ENCODE measurements at regions of chr10 and their contacts with region 1.

Region 1: DNA sequence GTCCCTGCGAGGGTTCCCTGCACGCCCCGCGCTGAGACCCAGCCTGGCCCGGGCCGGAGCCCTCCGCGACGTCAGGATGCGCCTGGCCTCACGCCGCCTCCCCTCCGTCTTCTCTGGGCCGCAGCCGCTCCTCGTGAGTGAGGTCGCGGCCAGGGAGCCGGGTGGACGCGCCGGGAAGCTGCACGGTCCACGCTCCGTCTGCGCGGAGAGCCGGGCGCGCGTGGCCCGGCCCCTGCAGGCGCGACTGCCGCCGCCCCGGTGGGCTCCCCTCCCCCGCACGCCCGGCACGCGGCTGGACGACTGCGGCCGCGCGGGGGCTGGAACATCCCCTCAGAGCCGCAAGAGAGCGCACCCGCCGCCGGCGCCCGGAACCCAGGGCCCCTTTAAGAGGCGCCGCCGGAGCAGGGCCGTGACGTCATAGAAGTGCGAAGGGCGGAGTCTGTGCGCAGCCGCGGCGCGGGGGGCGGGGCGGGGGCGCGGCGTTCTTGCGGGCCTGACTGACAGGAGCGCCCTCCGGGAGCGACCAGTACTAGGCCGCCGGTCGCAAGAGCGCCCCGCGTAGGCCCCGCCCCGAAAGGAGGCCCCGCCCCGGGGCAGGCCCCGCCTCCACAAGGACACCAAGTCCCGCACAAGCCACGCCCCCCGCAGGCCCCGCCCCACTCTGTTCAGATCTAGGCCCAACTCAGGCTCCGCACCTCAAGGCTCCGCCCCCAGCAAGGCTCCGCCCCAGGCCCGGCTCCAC is 445 bp upstream of the INPP5A start:
- DNase-seq: peak; percentile 84
- ATAC-seq: peak; percentile 84
- H3K4me3 ChIP-seq: peak overlapping the region; percentile 68
- H3K27ac ChIP-seq: no peak overlapping the region
- H3K4me1 ChIP-seq: peaks cover 29% of the 10 kb centered on the region
- H3K27me3 ChIP-seq: no peaks in the 10 kb centered on the region
- CTCF ChIP-seq: peak; percentile 5 to 43 (median 13); a peak in 4 of 6 replicates
- EP300 ChIP-seq: no peak
- POLR2A ChIP-seq: peak; percentile 52; the same call in 1 of the 2 replicates
- RAD21 ChIP-seq: peak; percentile 31; the same call in 1 of the 2 replicates

Region 2: DNA sequence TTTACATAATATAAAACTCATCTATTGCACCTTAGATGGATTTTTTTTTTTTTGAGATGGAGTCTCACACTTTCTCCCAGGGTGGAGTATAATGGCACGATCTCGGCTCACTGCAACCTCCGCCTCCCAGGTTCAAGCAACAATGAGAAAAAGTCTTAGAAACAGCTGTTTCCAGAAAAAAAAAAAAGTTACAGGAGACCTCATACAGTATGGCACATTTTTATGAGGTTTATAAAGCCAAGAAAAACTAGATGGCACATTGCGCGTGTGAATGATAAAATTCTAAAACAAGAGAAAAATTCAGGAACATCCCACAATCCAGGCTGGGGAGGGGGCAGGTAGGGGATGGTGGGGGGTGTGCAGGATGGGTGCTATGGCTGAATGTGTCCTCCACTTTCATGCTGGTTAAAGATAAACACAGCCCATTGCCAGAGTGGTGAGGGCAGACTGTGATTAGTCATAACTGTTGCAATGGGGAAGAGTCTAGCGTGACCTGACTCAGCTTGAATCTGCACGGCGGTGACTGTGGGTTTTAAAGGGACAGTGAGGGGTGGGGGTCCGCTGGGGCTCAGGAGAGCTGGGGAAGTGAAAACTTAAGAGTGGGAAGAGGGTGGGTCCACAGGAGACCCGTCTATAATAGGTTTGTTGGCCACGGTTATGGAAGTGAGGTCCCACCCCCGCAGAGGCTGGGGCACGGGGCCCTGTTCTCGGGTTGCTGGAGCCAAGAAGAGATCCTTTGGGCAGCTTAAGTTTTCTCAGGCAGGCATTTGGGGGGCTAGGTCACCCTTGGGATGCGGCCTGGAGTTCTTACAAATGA is 217.1 kb before region 1 on chr10:
- CTCF ChIA-PET with region 1: no interaction called
- POLR2A ChIA-PET with region 1: no interaction called
- RAD21 ChIA-PET with region 1: no interaction called
- SMC1A ChIA-PET with region 1: no interaction called
- in situ Hi-C with region 1: no loop called
- intact Hi-C with region 1: loop called (anchors 5 kb)
- DNase-seq: peak; percentile 66
- ATAC-seq: peak; percentile 100
- H3K4me3 ChIP-seq: no peak overlapping the region
- H3K27ac ChIP-seq: peak overlapping the region; percentile 17; the same call in 1 of the 2 replicates
- H3K4me1 ChIP-seq: peaks cover 27% of the 10 kb centered on the region
- H3K27me3 ChIP-seq: no peaks in the 10 kb centered on the region
- CTCF ChIP-seq: no peak
- EP300 ChIP-seq: peak in 1 of 2 experiments; percentile 83; a peak in 1 of 4 replicates
- POLR2A ChIP-seq: no peak
- RAD21 ChIP-seq: 0 out of 2 replicates have a peak, but pooled peaks have one; percentile 5

Region 3: DNA sequence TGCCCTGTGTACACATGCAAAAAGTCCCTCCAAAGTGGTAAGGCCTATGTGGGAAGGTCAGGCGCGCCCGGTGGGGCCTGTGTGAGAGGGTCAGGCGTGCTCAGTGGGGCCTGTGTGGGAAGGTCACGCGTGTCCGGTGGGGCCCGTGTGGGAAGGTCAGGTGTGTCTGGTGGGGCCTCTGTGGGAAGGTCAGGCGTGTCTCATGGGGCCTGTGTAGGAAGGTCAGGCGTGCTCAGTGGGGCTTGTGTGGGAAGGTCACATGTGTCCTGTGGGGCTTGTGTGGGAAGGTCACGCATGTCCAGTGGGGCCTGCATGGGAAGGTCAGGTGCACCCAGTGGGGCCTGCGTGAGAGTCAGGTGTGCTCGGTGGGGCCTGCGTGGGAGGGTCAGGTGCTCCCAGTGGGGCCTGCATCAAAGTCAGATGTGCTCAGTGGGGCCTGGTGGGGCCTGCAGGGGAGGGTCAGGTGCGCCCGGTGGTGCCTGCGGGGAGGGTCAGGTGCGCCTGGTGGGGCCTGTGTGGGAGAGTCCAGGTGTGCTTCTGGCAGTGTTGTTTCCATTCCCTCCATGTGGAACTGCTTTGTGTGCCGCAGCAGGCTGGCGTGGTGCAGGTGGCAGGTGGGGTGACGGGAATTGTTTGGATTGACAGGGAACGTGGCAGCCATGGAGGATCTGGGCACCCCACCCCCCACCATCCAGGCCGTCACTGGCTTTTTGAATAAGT is 189.8 kb before region 1 on chr10:
- CTCF ChIA-PET with region 1: no interaction called
- POLR2A ChIA-PET with region 1: no interaction called
- RAD21 ChIA-PET with region 1: no interaction called
- SMC1A ChIA-PET with region 1: no interaction called
- in situ Hi-C with region 1: no loop called
- intact Hi-C with region 1: no loop called
- DNase-seq: no peak
- ATAC-seq: no peak
- H3K4me3 ChIP-seq: no peak overlapping the region
- H3K27ac ChIP-seq: no peak overlapping the region
- H3K4me1 ChIP-seq: no peaks in the 10 kb centered on the region
- H3K27me3 ChIP-seq: no peaks in the 10 kb centered on the region
- CTCF ChIP-seq: no peak
- EP300 ChIP-seq: no peak
- POLR2A ChIP-seq: no peak
- RAD21 ChIP-seq: no peak

Region 4: DNA sequence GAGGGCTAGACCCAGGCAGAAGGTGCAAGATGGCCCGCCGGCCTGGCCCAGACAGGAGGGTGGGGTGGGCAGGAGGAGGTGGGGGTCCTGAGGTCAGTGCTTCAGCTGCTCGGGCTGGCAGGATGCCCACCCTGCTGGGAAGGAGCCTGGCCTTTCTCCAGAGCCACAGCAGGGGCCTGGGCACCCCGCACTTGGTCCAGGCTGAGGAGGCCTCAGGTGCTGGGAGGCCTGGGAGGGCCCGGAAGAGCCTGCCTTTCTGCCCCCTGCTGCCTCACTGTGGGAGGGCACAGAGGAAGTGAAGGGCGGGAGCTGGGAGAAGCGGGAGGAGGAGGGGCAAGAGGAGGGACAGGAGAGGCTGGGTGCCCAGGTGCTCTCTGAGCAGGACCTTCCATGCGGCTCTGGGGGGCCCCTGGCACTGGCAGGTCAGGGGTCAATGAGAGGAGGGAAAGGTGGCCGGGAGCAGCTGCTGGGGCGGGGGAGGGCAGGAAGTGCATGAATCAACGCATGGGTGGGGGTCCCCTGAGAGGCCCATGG is 90.4 kb before region 1 on chr10:
- CTCF ChIA-PET with region 1: no interaction called
- POLR2A ChIA-PET with region 1: no interaction called
- RAD21 ChIA-PET with region 1: no interaction called
- SMC1A ChIA-PET with region 1: no interaction called
- in situ Hi-C with region 1: no loop called
- intact Hi-C with region 1: no loop called
- DNase-seq: peak; percentile 21
- ATAC-seq: peak; percentile 84
- H3K4me3 ChIP-seq: 0 out of 2 replicates have a peak overlapping the region, but pooled peaks have one; percentile 16
- H3K27ac ChIP-seq: peak overlapping the region; percentile 62
- H3K4me1 ChIP-seq: peaks cover 19% of the 10 kb centered on the region
- H3K27me3 ChIP-seq: no peaks in the 10 kb centered on the region
- CTCF ChIP-seq: peak; percentile 43 to 63 (median 48)
- EP300 ChIP-seq: no peak
- POLR2A ChIP-seq: peak; percentile 51; the same call in 1 of the 2 replicates
- RAD21 ChIP-seq: peak; percentile 31; the same call in 1 of the 2 replicates

Region 5: GRCh38 chr10:132458593-132459300 is 78.4 kb before region 1 on chr10:
- CTCF ChIA-PET with region 1: interaction called, 25 read pairs
- POLR2A ChIA-PET with region 1: no interaction called
- RAD21 ChIA-PET with region 1: interaction called, 23 read pairs
- SMC1A ChIA-PET with region 1: interaction called, 17 read pairs
- in situ Hi-C with region 1: loop called (anchors 5 kb)
- intact Hi-C with region 1: no loop called
- DNase-seq: no peak
- ATAC-seq: peak; percentile 90
- H3K4me3 ChIP-seq: no peak overlapping the region
- H3K27ac ChIP-seq: no peak overlapping the region
- H3K4me1 ChIP-seq: no peaks in the 10 kb centered on the region
- H3K27me3 ChIP-seq: no peaks in the 10 kb centered on the region; a peak in 2 of 4 replicates
- CTCF ChIP-seq: peak; percentile 82 to 95 (median 90)
- EP300 ChIP-seq: no peak
- POLR2A ChIP-seq: no peak
- RAD21 ChIP-seq: peak; percentile 87

Region 6: GRCh38 chr10:132551093-132551807 is 14.1 kb after region 1 on chr10:
- CTCF ChIA-PET with region 1: interaction called, 26 read pairs
- POLR2A ChIA-PET with region 1: interaction called, 10 read pairs
- RAD21 ChIA-PET with region 1: interaction called, 26 read pairs
- SMC1A ChIA-PET with region 1: interaction called, 16 read pairs
- in situ Hi-C with region 1: no loop called
- intact Hi-C with region 1: no loop called
- DNase-seq: no peak
- ATAC-seq: peak; percentile 77
- H3K4me3 ChIP-seq: no peak overlapping the region
- H3K27ac ChIP-seq: no peak overlapping the region; the same call in 1 of the 2 replicates
- H3K4me1 ChIP-seq: peaks cover 30% of the 10 kb centered on the region
- H3K27me3 ChIP-seq: no peaks in the 10 kb centered on the region; a peak in 1 of 4 replicates
- CTCF ChIP-seq: peak in 1 of 3 experiments; percentile 8; a peak in 2 of 6 replicates
- EP300 ChIP-seq: no peak
- POLR2A ChIP-seq: peak; percentile 70
- RAD21 ChIP-seq: peak; percentile 23; the same call in 1 of the 2 replicates

Region 7: GRCh38 chr10:132563843-132564521 is 26.8 kb after region 1 on chr10:
- CTCF ChIA-PET with region 1: interaction called, 9 read pairs
- POLR2A ChIA-PET with region 1: interaction called, 7 read pairs
- RAD21 ChIA-PET with region 1: interaction called, 19 read pairs
- SMC1A ChIA-PET with region 1: interaction called, 10 read pairs
- in situ Hi-C with region 1: no loop called
- intact Hi-C with region 1: loop called (anchors 2 kb)
- DNase-seq: peak; percentile 76
- ATAC-seq: peak; percentile 94
- H3K4me3 ChIP-seq: peak overlapping the region; percentile 40; the same call in 1 of the 2 replicates
- H3K27ac ChIP-seq: no peak overlapping the region
- H3K4me1 ChIP-seq: peaks cover 40% of the 10 kb centered on the region
- H3K27me3 ChIP-seq: no peaks in the 10 kb centered on the region
- CTCF ChIP-seq: peak in 1 of 3 experiments; percentile 22; a peak in 1 of 6 replicates
- EP300 ChIP-seq: peak; percentile 64 to 90; a peak in 2 of 4 replicates
- POLR2A ChIP-seq: no peak
- RAD21 ChIP-seq: no peak

Region 8: DNA sequence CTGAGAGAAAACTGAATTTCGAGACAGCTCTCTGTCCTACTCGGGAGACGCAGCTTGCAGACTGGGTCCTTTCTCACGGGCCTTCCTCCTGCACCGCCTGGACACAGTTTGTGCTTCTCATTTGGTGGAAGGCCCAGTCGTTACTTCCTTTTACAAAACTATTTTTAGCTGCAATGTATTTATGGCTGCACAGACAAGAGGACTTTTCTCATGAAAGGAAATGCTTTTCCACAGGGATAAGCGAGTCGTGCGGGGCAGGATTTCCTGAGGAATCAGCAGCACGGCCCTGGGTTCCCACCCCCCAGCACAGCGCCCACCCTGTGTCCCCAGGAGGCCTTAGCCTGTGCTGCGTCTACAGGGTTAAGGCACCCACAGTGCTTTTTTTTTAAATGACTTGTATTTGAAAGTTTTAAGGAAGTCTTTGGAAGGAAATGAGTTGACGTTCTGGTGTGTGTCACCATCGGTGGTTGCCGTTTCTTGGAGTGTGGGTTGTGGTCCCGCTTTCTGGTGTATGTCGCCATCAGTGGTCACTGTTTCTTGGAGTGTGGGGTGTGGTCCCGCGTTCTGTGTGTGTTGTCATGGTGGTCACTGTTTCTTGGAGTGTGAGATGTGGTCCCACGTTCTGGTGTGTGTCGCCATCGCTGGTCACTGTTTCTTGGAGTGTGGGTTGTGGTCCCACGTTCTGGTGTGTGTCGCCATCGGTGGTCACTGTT is 51.3 kb after region 1 on chr10:
- CTCF ChIA-PET with region 1: interaction called, 9 read pairs
- POLR2A ChIA-PET with region 1: interaction called, 8 read pairs
- RAD21 ChIA-PET with region 1: interaction called, 16 read pairs
- SMC1A ChIA-PET with region 1: interaction called, 21 read pairs
- in situ Hi-C with region 1: no loop called
- intact Hi-C with region 1: no loop called
- DNase-seq: no peak
- ATAC-seq: peak; percentile 73
- H3K4me3 ChIP-seq: peak overlapping the region; percentile 28; the same call in 1 of the 2 replicates
- H3K27ac ChIP-seq: peak overlapping the region; percentile 9
- H3K4me1 ChIP-seq: peaks cover 19% of the 10 kb centered on the region
- H3K27me3 ChIP-seq: no peaks in the 10 kb centered on the region
- CTCF ChIP-seq: no peak
- EP300 ChIP-seq: no peak
- POLR2A ChIP-seq: no peak
- RAD21 ChIP-seq: no peak

Region 9: GRCh38 chr10:132637477-132638129 is 100.5 kb after region 1 on chr10:
- CTCF ChIA-PET with region 1: interaction called, 4 read pairs
- POLR2A ChIA-PET with region 1: no interaction called
- RAD21 ChIA-PET with region 1: interaction called, 17 read pairs
- SMC1A ChIA-PET with region 1: interaction called, 4 read pairs
- in situ Hi-C with region 1: no loop called
- intact Hi-C with region 1: loop called (anchors 5 kb)
- DNase-seq: peak; percentile 43
- ATAC-seq: peak; percentile 89
- H3K4me3 ChIP-seq: no peak overlapping the region
- H3K27ac ChIP-seq: no peak overlapping the region
- H3K4me1 ChIP-seq: no peaks in the 10 kb centered on the region
- H3K27me3 ChIP-seq: no peaks in the 10 kb centered on the region
- CTCF ChIP-seq: peak; percentile 58 to 86 (median 67); a peak in 5 of 6 replicates
- EP300 ChIP-seq: no peak
- POLR2A ChIP-seq: no peak
- RAD21 ChIP-seq: peak; percentile 97

Measured in GM12878 (cell line).